IMR-90 (cell line): ENCODE measurements at regions of chr9 and their contacts with region 1.

Region 1: DNA sequence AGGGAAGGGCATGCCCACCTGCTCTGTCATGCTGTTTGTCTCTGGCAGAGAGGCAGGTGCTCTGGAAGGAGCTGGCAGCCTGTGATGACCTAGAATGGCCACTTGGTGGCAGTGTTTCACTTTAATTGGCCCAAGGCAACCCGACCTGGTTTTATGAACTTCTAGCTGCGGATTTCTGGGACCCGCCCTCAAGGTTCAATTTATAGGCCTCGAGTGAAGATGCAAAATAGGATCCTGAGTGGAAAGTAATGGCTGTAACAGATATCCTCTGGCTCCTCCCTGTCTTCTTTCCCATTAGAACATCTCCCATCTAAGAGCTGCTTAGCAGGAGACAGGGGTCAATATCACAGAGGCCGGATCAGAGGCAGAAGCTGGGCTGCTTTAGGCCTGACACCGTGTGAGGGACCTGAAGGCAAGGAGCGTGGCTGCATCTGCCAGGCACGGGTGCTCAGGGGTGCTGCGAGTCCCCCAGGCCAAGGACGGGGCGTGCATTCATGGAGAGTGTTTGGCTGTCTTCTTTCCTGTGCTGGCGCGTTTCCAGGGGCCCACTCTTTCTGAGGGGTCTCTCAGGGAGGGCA is 56.7 kb upstream of the SLC28A3 start:
- DNase-seq: peak; percentile 63
- ATAC-seq: peak; percentile 93
- H3K4me3 ChIP-seq: no peak overlapping the region
- H3K27ac ChIP-seq: no peak overlapping the region
- H3K4me1 ChIP-seq: no peaks in the 10 kb centered on the region
- H3K27me3 ChIP-seq: peaks cover 3% of the 10 kb centered on the region; the same call in 1 of the 2 replicates
- CTCF ChIP-seq: peak; percentile 87
- POLR2A ChIP-seq: 0 out of 2 replicates have a peak, but pooled peaks have one; percentile 31
- RAD21 ChIP-seq: peak; percentile 89

Region 2: DNA sequence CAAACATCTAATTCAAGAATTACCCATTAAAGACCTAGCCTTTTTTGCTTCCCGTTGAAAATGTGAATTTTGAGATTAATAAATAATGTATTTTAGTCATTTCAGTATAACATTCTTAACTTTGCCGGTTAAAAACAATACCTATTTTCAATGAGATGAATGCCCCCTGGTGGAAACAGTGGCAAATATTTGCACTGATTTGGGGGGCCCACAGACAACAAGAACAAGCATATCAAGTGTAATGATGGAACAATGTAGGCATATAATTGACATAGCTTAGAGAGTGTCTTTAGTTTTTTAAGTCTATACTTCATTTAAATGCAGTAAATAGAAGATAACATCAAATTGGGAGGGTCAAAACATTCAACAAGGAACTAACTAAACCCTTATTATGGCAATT is 384.2 kb after region 1 on chr9:
- CTCF ChIA-PET with region 1: interaction called, 5 read pairs
- POLR2A ChIA-PET with region 1: no interaction called
- dilution Hi-C with region 1: no loop called
- in situ Hi-C with region 1: no loop called
- intact Hi-C with region 1: loop called (anchors 5 kb)
- DNase-seq: no peak
- ATAC-seq: no peak
- H3K4me3 ChIP-seq: no peak overlapping the region
- H3K27ac ChIP-seq: no peak overlapping the region
- H3K4me1 ChIP-seq: no peaks in the 10 kb centered on the region
- H3K27me3 ChIP-seq: no peaks in the 10 kb centered on the region
- CTCF ChIP-seq: peak; percentile 44
- POLR2A ChIP-seq: no peak
- RAD21 ChIP-seq: peak; percentile 43

Region 3: DNA sequence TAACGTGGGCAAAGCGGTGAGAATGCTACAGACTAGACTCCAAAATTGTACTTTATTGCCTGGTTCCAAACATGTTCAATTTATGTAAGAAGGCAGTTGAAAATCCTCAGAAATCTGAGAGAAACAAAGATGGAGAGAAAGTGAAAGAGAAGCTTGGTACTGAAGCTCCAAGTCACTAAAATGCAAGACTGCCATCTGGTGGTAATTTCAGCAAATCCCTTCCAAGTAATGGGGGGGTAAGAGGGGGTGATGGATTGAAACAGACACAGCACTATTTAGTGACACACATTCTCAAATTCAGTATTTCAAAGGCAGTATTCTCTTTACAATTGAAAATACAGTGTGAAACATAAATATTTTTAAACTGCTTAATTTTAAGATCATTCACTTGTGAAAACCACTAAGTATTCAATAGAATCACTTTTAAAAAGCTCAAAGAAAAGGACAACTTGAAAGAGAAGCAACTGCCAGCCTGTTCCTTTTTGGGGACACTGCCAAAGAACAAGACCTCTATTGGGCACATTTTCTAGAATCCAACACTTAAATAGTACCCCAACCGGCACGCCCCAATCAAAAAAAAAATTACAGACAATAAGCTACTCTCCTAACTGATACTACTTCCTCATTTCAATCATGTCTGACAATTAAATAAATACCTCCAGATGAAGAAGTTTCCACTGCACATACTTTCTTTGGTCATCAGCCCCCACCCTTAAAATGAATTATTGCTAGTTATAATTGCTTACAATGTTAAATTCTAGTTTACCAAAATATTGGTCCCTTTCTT is 1213.0 kb after region 1 on chr9:
- CTCF ChIA-PET with region 1: interaction called, 13 read pairs
- POLR2A ChIA-PET with region 1: interaction called, 5 read pairs
- dilution Hi-C with region 1: no loop called
- in situ Hi-C with region 1: loop called (anchors 5 kb)
- intact Hi-C with region 1: loop called (anchors 1 kb)
- DNase-seq: peak; percentile 82
- ATAC-seq: peak; percentile 87
- H3K4me3 ChIP-seq: peak overlapping the region; percentile 39; the same call in 1 of the 2 replicates
- H3K27ac ChIP-seq: no peak overlapping the region
- H3K4me1 ChIP-seq: no peaks in the 10 kb centered on the region
- H3K27me3 ChIP-seq: no peaks in the 10 kb centered on the region
- CTCF ChIP-seq: peak; percentile 93
- POLR2A ChIP-seq: no peak
- RAD21 ChIP-seq: peak; percentile 87

Region 4: DNA sequence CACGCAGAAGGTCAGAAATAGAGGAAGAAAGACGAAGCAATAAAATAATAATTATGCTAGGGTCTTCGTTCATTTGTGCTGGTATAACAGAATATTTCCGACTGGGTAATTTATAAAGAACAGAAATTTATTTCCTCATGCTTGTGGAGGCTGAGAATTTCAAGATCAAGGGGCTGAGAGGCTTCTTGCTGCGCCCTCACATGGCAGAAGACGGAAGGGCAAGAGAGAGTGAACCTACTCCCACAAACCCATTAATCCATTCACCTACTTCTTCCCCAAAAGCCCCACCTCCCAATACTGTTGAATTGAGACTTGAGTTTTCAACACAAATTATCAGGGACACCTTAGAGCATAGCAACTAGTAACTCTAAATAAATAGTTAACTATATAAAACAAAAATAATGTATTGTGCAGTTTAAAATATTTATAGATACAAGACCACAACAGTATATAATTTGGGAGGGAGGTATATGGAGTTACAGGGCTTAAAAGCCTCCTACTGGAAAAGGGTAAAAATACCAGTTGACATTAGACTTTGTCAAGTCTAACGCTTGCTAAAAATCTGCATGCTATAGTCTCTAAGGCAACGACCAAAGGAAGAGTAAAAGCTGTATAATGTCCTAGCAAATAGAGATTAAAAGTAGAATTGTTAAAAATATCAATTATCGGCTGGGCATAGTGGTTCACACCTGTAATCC is 1503.4 kb after region 1 on chr9:
- CTCF ChIA-PET with region 1: no interaction called
- POLR2A ChIA-PET with region 1: no interaction called
- dilution Hi-C with region 1: no loop called
- in situ Hi-C with region 1: no loop called
- intact Hi-C with region 1: loop called (anchors 5 kb)
- DNase-seq: peak; percentile 36
- ATAC-seq: peak; percentile 75; the same call in 1 of the 2 replicates
- H3K4me3 ChIP-seq: no peak overlapping the region
- H3K27ac ChIP-seq: no peak overlapping the region
- H3K4me1 ChIP-seq: no peaks in the 10 kb centered on the region
- H3K27me3 ChIP-seq: no peaks in the 10 kb centered on the region; the same call in 1 of the 2 replicates
- CTCF ChIP-seq: peak; percentile 52
- POLR2A ChIP-seq: no peak
- RAD21 ChIP-seq: peak; percentile 40